Psoas muscle (tissue), 8 donors: ENCODE measurements at regions of chr1 and their contacts with region 1.

Region 1: GRCh38 chr1:155012026-155012546 is 9.5 kb downstream of the ZBTB7B start:
- DNase-seq: peak; percentile 80 to 89
- ATAC-seq: peak in 3 of 4 donors; percentile 29 to 63 (median 46)
- H3K4me3 ChIP-seq: no peak overlapping the region
- H3K27ac ChIP-seq: peak overlapping the region; percentile 50
- H3K4me1 ChIP-seq: peaks cover 49% of the 10 kb centered on the region
- H3K27me3 ChIP-seq: no peaks in the 10 kb centered on the region
- CTCF ChIP-seq: no peak

Region 2: DNA sequence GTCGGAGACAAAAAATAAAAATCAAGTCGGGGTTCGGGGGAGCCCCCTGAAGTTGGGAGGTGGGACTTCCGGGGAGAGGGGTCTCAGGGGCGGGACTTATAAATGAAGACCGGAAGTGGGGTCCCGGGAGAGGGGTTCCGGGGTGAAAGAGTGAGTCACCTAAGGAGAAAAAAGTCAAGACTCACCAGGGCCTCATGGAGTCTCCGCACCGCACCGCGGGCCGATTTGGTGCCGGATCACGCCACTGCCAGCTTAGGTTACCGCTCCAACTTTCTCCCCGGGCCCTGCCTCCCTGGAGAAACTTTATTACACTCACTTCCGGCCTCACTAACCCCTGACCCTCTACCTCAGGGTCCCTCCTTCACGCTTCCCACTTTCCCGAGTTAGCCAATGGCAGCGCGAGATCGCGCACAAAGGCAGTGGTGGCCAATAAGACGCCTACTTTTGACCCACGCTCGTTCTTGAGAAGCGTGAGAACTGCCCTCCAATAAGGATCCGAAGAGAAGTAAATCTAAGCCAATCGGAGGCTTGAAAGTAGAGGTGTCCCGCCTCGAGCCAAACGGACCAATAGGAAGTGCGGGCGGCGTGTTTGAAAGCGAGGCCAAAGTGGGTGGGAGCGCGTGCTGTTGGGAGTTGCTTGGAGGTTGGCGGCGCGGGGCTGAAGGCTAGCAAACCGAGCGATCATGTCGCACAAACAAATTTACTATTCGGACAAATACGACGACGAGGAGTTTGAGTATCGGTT is 37.9 kb before region 1 on chr1 and contains the start of gene CKS1B:
- intact Hi-C with region 1: loop called in 1 of 2 experiments (anchors 5 kb)
- DNase-seq: peak; percentile 97 to 98
- ATAC-seq: peak; percentile 86 to 89 (median 86)
- H3K4me3 ChIP-seq: peak within 1 kb of the TSS; percentile 84
- H3K27ac ChIP-seq: peak within 1 kb of the TSS; percentile 99
- H3K4me1 ChIP-seq: peaks cover 49% of the 10 kb centered on the region
- H3K27me3 ChIP-seq: no peaks in the 10 kb centered on the region
- CTCF ChIP-seq: no peak
- total RNA-seq, gene CKS1B: 5.5 to 13.8 (median 6.9) TPM

Region 3: DNA sequence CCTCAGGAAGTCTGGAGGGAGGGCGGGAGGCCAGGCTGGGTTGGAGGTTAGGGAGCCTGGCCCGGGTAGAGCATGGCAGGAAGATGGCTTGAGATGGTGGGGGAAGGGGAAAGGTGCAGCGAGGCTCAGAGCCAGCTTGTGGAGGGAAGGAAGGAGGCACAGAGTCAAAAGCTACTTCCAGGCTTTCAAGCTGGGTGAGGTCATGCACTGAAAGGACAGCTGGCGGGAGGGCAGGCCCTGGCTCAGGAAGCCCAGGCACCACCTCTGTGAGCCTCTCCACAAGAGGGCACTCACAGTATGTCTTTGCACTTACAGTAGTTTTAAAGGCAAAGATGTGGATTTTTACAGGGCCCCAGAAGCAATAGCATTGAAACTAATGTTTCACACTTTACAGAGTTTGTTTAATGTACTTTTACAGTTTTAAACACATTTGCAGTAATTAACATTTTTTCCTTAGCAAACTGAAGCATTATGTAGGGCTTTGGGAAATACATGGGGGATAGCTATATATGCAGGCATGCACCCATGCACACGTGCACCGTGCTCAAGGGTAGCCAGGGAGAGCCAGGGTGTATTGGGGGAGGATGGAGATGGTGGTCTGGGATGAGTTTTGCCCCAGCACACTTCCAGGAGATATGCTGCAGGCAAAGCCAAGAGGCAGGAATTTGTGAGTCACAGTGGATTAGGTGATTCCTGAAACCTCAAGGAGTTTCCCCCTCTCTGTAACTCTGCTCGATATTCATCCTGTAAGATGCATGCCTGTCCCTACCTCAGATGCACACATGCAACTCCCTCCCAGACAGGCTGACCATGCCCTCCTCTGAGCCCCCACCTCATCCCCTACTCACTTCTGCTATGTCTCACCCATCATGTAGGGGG is 33.0 kb after region 1 on chr1:
- intact Hi-C with region 1: loop called in 1 of 2 experiments (anchors 1 kb)
- DNase-seq: peak; percentile 80 to 92
- ATAC-seq: peak; percentile 95 to 98 (median 97)
- H3K4me3 ChIP-seq: no peak overlapping the region
- H3K27ac ChIP-seq: peak overlapping the region; percentile 34
- H3K4me1 ChIP-seq: peaks cover 27% of the 10 kb centered on the region
- H3K27me3 ChIP-seq: no peaks in the 10 kb centered on the region
- CTCF ChIP-seq: peak; percentile 84

Region 4: DNA sequence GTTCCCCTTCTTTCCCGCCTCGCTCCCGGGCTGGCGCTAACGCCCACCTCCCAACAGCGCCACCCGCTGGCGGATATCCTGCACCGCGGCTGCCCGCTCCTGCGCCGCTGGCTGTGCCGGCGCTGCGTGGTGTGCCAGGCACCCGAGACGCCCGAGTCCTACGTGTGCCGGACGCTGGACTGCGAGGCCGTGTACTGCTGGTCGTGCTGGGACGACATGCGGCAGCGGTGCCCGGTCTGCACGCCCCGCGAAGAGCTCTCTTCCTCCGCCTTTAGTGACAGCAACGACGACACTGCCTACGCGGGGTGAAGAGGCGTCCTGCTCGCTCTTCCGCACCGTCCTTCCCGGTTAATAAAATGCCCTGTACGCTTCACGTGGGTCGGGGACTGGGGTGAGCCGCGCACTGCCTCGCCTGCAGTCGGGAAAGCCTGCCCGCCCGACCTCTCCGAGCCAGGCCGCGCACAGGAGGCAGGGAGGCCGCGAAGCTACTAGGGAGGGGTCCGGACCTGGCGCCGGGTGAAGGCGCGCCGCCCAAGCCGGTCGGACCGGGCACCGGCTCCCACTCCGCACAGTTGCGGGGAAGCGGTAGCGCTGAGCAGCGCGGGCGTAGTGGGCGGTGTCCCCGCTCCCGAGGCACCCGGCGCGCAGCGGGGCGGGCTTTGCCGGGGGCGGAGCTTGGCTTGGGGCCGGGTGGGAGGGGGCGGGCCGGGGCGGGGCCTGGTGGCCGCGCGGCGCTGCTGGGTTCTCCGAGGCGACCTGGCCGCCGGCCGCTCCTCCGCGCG is 38.7 kb after region 1 on chr1 and contains the start of gene ADAM15:
- intact Hi-C with region 1: loop called in 1 of 2 experiments (anchors 1 kb)
- DNase-seq: peak; percentile 88 to 93
- ATAC-seq: peak; percentile 87 to 89 (median 88)
- H3K4me3 ChIP-seq: peak within 1 kb of the TSS; percentile 88
- H3K27ac ChIP-seq: peak within 1 kb of the TSS; percentile 86
- H3K4me1 ChIP-seq: peaks cover 23% of the 10 kb centered on the region
- H3K27me3 ChIP-seq: no peaks in the 10 kb centered on the region
- CTCF ChIP-seq: peak; percentile 93
- total RNA-seq, gene ADAM15: 38.4 to 50.9 (median 49.3) TPM